ENCODE measurements at regions of chr17 and their contacts with region 1.

Region 1: DNA sequence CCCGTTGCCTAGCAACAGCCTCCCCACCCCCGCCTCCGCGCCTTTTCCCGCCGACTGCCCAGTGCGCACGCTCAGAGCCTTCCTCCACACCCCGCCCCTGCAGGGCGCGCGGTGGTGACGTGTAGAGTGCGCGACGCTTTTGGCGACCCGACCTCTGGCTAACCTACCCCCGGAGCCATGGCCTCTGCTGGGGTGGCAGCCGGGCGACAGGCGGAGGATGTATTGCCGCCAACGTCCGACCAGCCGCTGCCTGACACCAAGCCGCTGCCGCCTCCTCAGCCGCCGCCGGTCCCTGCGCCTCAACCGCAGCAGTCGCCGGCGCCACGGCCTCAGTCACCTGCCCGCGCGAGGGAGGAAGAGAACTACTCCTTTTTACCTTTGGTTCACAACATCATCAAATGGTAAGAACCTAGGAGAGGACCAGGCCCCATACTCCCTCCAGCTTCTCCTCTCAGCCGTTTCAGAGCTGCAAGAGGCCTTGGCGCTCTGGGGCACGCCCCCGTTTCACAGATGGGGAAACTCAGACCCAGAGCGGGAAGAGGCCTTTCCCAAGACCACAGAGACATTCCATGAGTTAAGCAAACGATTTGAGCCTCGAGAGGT is at the start of gene MED9:
- DNase-seq: peak; percentile 94
- ATAC-seq: peak; percentile 99
- total RNA-seq, gene MED9: 26.8 to 35.1 TPM

Region 2: GRCh38 chr17:17363638-17364337 is 113.2 kb before region 1 on chr17:
- intact Hi-C with region 1: loop called in 1 of 2 experiments (anchors 10 kb)
- DNase-seq: no peak
- ATAC-seq: no peak

Region 3: GRCh38 chr17:17416007-17416399 is 61.0 kb before region 1 on chr17:
- intact Hi-C with region 1: loop called in 1 of 2 experiments (anchors 10 kb)
- DNase-seq: no peak
- ATAC-seq: peak in 1 of 2 donors; percentile 23

Measured in left cardiac atrium (tissue), 4 donors.